ENCODE measurements at regions of chr20 and their contacts with region 1.

Region 1: DNA sequence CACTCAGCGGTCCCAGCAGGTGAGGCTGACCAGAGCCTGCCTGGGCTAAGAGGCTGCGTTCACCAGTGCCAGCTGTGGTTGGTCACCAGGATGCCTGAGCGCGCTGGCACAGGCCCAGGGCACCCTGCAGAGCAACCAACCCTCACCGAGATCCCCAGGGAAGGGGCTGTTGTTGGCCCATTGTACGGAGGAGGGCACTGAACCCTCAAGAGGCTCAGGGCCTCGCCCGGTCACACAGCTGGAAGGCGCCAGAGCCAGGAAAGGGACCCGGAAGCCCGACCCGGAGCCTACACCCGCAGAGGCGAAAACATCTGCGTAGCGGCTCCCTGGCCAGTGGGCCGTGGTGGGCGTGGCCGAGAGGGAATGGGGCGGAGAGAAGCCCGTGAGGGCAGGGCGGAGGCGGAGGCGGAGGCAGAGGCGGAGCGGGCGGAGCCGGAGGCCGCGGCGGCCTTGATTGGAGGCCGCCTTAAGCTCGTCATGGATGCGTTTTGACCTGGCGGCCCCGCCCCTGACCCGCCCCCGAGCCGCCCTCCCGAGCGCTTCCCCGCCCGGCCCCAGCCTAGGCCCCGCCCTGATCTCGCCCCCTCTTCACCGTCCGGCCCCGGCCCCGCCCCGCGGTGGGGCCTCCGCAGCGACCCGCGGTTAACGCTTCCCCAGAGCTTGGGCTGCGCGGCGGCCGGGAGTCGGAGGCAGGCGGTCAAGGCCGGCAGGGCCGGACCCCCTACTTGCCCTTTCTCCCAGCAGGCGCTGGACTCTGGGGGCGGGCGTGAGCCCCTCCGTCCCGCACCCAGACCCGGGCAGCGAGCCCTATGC is 2.2 kb upstream of the MRGBP start:
- DNase-seq: peak; percentile 98
- ATAC-seq: peak; percentile 75
- H3K4me3 Mint-ChIP-seq: peak overlapping the region; percentile 80
- H3K27ac Mint-ChIP-seq: peak overlapping the region; percentile 88
- H3K4me1 Mint-ChIP-seq: peaks cover 31% of the 10 kb centered on the region
- H3K27me3 Mint-ChIP-seq: no peaks in the 10 kb centered on the region

Region 2: GRCh38 chr20:62143118-62143973 is 650.8 kb before region 1 on chr20 and contains the starts of genes PSMA7 and SS18L1:
- CTCF ChIA-PET with region 1: no interaction called
- POLR2A ChIA-PET with region 1: no interaction called
- intact Hi-C with region 1: loop called in 1 of 2 experiments (anchors 1 kb)
- DNase-seq: peak; percentile 92
- ATAC-seq: peak; percentile 87
- H3K4me3 Mint-ChIP-seq: peak within 1 kb of the TSS; percentile 89
- H3K27ac Mint-ChIP-seq: peak within 1 kb of the TSS; percentile 91
- H3K4me1 Mint-ChIP-seq: peaks cover 61% of the 10 kb centered on the region
- H3K27me3 Mint-ChIP-seq: no peaks in the 10 kb centered on the region
- total RNA-seq, gene PSMA7: 208 to 296 TPM
- total RNA-seq, gene SS18L1: 14.3 to 16.6 TPM

Region 3: DNA sequence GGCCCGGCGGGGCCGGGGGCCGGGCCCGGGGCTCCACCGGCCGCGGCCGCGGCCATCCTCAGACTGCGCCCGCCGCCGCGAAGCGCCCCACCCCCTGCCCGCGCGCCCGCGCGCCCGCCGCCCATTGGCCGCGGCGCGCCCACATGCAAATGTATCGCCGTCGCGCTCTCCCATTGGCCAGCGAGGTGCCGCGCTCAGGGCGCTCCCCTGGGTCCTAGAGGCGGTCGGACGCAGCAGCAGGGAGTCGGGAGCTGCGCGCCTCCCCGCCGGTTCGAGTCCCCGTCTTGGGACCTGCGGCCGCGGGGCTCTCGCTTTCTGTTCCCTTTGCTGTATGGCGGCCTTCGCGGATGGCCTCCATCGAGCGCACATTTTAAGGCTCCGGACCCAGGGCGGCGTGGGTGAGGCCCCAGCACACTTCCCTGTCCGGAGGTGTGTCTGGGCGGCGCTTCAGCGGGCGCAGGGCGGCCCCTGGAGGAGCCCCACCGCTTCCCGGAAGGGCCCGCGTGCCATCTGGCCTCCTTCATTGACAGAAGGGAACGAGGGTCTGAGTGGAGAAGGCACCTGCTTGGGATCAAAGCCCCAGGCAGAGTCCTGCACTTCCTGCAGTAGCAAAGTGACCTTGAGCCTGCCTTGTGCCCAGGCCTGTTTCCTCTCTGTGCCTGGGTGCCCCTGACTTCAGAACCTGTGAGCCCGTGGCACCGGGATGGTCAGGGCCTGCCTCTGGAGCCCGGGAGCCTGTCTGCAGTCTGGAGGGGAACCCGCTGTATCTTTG is 386.7 kb before region 1 on chr20 and contains the start of gene CABLES2:
- CTCF ChIA-PET with region 1: no interaction called
- POLR2A ChIA-PET with region 1: no interaction called
- intact Hi-C with region 1: loop called in 1 of 2 experiments (anchors 1 kb)
- DNase-seq: peak; percentile 96
- ATAC-seq: peak; percentile 93
- H3K4me3 Mint-ChIP-seq: peak within 1 kb of the TSS; percentile 72
- H3K27ac Mint-ChIP-seq: peak within 1 kb of the TSS; percentile 82
- H3K4me1 Mint-ChIP-seq: peaks cover 23% of the 10 kb centered on the region
- H3K27me3 Mint-ChIP-seq: peaks cover 2% of the 10 kb centered on the region
- total RNA-seq, gene CABLES2: 6.4 to 7.6 TPM

Region 4: GRCh38 chr20:62603021-62603906 is 190.9 kb before region 1 on chr20:
- CTCF ChIA-PET with region 1: no interaction called
- POLR2A ChIA-PET with region 1: no interaction called
- intact Hi-C with region 1: no loop called
- DNase-seq: peak; percentile 78
- ATAC-seq: peak; percentile 70
- H3K4me3 Mint-ChIP-seq: peak overlapping the region; percentile 41
- H3K27ac Mint-ChIP-seq: peak overlapping the region; percentile 44
- H3K4me1 Mint-ChIP-seq: peaks cover 21% of the 10 kb centered on the region
- H3K27me3 Mint-ChIP-seq: peaks cover 16% of the 10 kb centered on the region

Region 5: DNA sequence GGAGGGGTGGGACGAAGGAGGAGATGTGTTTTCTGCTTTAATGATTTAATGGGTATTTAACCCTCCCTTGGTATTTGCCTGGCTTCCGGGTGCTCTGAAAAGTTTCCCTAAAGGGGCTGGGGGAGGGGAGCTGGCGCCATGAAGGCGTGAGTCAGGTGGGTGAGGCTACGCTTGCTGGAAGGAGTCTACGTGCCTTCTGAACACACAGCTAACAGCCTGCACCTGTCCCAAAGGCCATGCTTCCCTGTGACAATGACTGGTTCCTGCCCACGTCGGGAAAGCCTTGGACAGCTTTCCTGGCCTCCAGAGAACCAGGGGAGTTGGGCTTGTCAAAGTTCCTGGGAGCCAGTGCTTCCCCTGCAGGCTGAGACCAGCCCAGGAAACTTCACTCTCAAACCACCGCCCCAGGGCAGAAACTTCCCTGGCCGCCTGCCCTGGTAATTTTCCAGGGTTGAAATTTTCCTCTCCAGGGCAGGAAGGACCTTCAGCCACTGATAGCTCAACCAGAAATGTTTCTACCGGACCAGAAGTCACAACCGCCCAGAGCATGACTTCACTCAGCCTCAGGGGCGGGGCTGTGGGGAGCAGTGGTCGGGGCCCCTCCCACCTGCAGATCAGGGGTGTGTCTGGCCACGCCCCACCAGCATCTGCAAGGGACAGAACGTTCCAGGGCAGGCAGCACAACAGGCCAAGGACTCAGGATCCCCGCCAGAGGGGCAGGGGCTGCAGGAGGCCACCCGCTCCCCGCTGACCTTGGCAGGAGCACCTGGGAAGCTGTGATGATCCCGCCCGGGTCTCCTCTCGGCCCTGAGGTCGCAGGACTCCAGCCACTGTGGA is 170.4 kb before region 1 on chr20:
- CTCF ChIA-PET with region 1: interaction called, 6 read pairs
- POLR2A ChIA-PET with region 1: no interaction called
- intact Hi-C with region 1: loop called (anchors 1 to 5 kb)
- DNase-seq: peak; percentile 97
- ATAC-seq: peak; percentile 91
- H3K4me3 Mint-ChIP-seq: peak overlapping the region; percentile 69
- H3K27ac Mint-ChIP-seq: peak overlapping the region; percentile 96
- H3K4me1 Mint-ChIP-seq: peaks cover 26% of the 10 kb centered on the region
- H3K27me3 Mint-ChIP-seq: no peaks in the 10 kb centered on the region

Region 6: DNA sequence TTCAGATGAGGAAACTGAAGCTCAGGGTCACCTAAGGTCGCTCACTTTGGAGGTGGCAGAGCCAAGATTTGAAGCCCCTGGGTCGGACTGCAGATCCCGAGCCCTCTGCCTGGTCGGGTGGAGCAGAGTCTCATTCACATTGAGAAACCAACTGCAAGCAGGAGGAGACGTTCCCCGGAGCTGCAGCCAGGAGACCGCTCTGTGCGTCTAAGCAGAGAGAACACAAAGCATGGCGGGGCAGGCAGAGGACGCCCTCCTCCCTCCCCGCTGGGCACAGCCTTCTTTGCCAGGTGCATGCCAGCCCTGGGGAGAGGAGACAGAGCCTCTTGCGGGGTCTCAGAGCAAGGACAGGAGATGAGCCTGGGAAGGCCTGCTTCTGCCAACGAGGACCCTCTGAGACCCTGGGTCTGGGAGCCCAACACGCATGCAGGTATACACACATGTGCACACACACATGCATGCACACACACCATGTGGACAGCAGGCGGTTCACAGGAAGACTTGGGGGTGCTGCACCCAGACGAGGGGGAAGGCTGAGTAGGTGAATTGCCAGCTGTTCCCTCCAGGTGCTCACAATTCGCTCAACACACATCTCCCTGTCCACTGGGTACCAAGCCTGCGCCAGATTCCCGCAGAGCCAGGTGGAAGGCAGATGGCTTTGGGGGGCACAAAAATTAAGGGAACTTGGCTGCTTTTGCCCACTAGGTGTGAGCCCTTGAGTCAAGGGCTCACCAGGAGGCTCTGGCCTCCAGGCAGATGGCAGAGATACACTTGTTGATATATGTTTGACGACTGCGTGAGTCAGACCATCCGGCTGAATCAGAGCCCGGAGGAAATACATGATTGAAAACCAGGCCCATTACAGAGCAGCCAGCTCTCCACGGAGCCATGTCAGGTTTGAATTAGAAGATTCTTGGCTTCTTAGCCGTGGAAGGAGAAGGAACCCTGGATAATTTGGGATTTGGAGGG is 90.9 kb before region 1 on chr20:
- CTCF ChIA-PET with region 1: interaction called, 4 read pairs
- POLR2A ChIA-PET with region 1: no interaction called
- intact Hi-C with region 1: loop called (anchors 1 kb)
- DNase-seq: peak; percentile 69
- ATAC-seq: peak; percentile 95
- H3K4me3 Mint-ChIP-seq: no peak overlapping the region
- H3K27ac Mint-ChIP-seq: peak overlapping the region; percentile 88
- H3K4me1 Mint-ChIP-seq: peaks cover 6% of the 10 kb centered on the region
- H3K27me3 Mint-ChIP-seq: peaks cover 9% of the 10 kb centered on the region

Region 7: GRCh38 chr20:62759981-62760431 is 34.1 kb before region 1 on chr20:
- CTCF ChIA-PET with region 1: no interaction called
- POLR2A ChIA-PET with region 1: no interaction called
- intact Hi-C with region 1: no loop called
- DNase-seq: no peak
- ATAC-seq: no peak
- H3K4me3 Mint-ChIP-seq: no peak overlapping the region
- H3K27ac Mint-ChIP-seq: no peak overlapping the region
- H3K4me1 Mint-ChIP-seq: no peaks in the 10 kb centered on the region
- H3K27me3 Mint-ChIP-seq: peaks cover 2% of the 10 kb centered on the region

Region 8: DNA sequence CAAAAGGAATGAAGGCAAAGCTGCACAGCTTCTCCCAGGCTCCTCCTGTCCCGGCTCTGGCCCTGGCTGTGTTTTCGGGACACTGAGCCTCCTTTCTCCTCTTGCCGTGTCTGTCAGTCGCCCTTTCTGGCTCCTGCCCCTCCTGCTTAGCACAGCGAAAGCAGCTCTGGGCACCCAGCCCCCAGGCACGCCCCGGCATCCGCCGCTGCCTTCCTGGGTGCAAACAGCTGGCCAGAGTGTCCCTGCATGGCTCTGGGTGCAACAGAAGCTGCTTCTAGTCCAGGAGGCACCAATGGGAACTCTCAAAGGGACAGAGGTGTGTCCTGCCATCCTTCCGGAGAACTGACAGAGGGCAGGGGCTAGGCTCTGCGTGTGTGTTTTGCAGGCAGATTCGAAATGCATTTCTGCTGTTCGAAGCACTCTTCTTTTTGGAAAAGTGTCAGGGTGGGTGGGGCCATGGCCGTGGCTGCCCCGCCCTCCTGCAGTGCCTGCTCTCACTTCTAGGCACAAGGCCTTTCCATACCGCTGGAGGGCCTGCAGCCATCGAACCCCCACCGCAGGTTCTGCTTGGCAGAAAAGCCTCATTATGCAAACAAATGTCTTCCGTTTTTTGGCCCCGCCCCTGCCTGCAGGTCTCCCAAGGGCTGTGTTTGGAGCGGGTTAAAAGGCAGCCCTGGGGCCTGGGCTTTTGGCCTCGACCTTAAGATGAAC is 38.2 kb after region 1 on chr20:
- CTCF ChIA-PET with region 1: no interaction called
- POLR2A ChIA-PET with region 1: no interaction called
- intact Hi-C with region 1: no loop called
- DNase-seq: peak; percentile 47
- ATAC-seq: peak; percentile 82
- H3K4me3 Mint-ChIP-seq: no peak overlapping the region
- H3K27ac Mint-ChIP-seq: no peak overlapping the region
- H3K4me1 Mint-ChIP-seq: peaks cover 4% of the 10 kb centered on the region
- H3K27me3 Mint-ChIP-seq: no peaks in the 10 kb centered on the region

Region 9: GRCh38 chr20:62861726-62862336 is 67.7 kb after region 1 on chr20 and contains the start of gene TCFL5:
- CTCF ChIA-PET with region 1: interaction called, 3 read pairs
- POLR2A ChIA-PET with region 1: interaction called, 10 read pairs
- intact Hi-C with region 1: loop called in 1 of 2 experiments (anchors 1 kb)
- DNase-seq: peak; percentile 97
- ATAC-seq: peak; percentile 92
- H3K4me3 Mint-ChIP-seq: peak within 1 kb of the TSS; percentile 66
- H3K27ac Mint-ChIP-seq: peak within 1 kb of the TSS; percentile 42
- H3K4me1 Mint-ChIP-seq: peaks cover 28% of the 10 kb centered on the region
- H3K27me3 Mint-ChIP-seq: no peaks in the 10 kb centered on the region
- total RNA-seq, gene TCFL5: 5.2 to 6.6 TPM

Region 10: GRCh38 chr20:63627129-63627750 is 833.1 kb after region 1 on chr20:
- CTCF ChIA-PET with region 1: no interaction called
- POLR2A ChIA-PET with region 1: no interaction called
- intact Hi-C with region 1: loop called in 1 of 2 experiments (anchors 2 kb)
- DNase-seq: peak; percentile 97
- ATAC-seq: peak; percentile 77
- H3K4me3 Mint-ChIP-seq: peak overlapping the region; percentile 87
- H3K27ac Mint-ChIP-seq: peak overlapping the region; percentile 97
- H3K4me1 Mint-ChIP-seq: peaks cover 39% of the 10 kb centered on the region
- H3K27me3 Mint-ChIP-seq: no peaks in the 10 kb centered on the region